Dorsolateral prefrontal cortex (tissue), 120 donors: ENCODE measurements at regions of chr7 and their contacts with region 1.

Region 1: DNA sequence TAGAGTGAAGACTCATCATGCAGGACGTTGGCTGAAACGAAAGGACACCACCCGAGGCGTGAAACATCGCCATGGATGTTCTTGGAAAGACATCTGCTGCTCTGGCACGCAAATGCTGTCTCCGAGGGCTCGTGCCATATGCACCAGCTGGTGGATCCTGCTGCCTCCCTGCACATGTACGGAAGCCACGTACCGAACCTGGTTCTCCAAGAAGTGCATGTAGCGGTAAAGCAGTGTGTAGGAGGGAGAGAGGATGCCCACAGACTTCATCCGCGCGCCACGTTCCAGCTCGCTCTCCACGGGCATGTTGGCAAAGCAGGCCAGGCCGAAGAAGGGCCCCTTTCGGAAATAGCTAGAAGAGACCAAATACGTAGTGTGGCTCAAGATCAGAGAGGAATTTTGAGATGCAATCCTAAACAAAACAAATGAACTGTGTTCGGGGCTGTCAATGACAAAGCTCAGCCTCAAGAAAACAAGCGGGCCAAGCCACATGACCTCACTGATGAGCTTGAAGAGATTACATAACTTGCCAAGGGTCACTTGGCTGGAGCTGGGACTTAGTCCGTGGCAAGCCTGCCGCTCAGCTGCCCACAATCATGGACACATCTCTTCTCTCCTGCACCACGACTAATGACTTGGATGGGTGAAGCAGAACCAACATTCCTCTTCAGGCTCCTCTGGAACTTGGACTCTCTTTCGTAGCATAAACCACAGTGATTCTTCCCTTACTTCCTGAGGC is 16.5 kb downstream of the DENND11 start:
- DNase-seq: peak; percentile 51 to 94 (median 78)
- H3K4me3 ChIP-seq: peak overlapping the region in 20 of 59 donors; percentile 3 to 45 (median 21)
- H3K27ac ChIP-seq: peak overlapping the region; percentile 44 to 93 (median 84)
- H3K27me3 ChIP-seq: no peaks in the 10 kb centered on the region
- CTCF ChIP-seq: peak in 1 of 56 donors; percentile 13

Region 2: DNA sequence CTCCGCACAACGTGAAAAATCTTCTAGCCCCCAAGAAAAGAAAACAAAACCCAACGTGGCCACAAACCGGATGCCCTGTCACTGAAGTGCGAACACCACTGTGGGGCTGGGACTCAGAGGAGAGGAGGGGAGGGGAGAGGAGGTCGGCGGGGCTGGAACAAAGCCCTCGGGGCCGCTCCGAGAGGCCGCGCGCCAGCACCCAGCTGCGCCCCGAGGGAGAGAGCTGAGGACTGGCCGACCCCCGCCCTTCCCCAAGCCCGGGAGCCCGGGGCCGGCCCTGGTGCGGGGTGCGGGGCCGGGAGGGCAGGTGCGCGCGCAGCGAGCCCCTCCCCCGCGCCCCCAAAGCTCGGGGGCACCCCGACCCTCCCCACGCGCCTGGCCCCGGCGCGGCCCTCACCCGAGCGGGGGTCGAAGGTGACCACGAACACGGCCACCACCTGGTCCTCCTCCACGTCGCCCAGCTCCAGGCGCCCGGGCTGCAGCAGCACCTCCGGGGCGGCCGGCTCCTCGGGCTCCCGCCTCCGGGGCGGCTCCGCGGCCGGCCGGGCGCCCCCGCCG is 16.1 kb after region 1 on chr7:
- intact Hi-C with region 1: loop called in 1 of 2 experiments (anchors 2 kb)
- DNase-seq: peak in 5 of 10 donors; percentile 31 to 62 (median 44)
- H3K4me3 ChIP-seq: peak overlapping the region; percentile 33 to 88 (median 76)
- H3K27ac ChIP-seq: peak overlapping the region in 57 of 59 donors; percentile 43 to 98 (median 92)
- H3K27me3 ChIP-seq: no peaks in the 10 kb centered on the region
- CTCF ChIP-seq: peak in 1 of 56 donors; percentile 9

Region 3: GRCh38 chr7:142279601-142280000 is 594.1 kb after region 1 on chr7:
- intact Hi-C with region 1: no loop called
- DNase-seq: peak in 3 of 10 donors; percentile 4 to 36 (median 33)
- H3K4me3 ChIP-seq: no peak overlapping the region
- H3K27ac ChIP-seq: no peak overlapping the region
- H3K27me3 ChIP-seq: peaks cover 0 to 12% (median 0%) of the 10 kb centered on the region in 45 donors
- CTCF ChIP-seq: no peak